Activated T-helper 1 cell treated with anti-CD3 and anti-CD28 coated beads, Interleukin-12 subunit alpha, Interleukin-12 subunit beta, Interleukin-2, Interleukin-4 antibody, amounts not matched to agents 30 ng/mL and 10 ng/mL and 1 ng/mL, durations not matched to agents 14 hours and 24 hours and 36 hours (primary cell): ENCODE measurements at regions of chr12 and their contacts with region 1.

Region 1: GRCh38 chr12:48851883-48852733 is at the start of gene DDX23:
- DNase-seq: peak; percentile 91
- H3K4me3 Mint-ChIP-seq: peak within 1 kb of the TSS; percentile 97
- H3K27ac Mint-ChIP-seq: peak within 1 kb of the TSS; percentile 93
- H3K4me1 Mint-ChIP-seq: peaks cover 31% of the 10 kb centered on the region
- H3K27me3 Mint-ChIP-seq: no peaks in the 10 kb centered on the region
- total RNA-seq, gene DDX23: 120 and 127 TPM in 2 replicates

Region 2: GRCh38 chr12:48814262-48815125 is 37.6 kb before region 1 on chr12:
- intact Hi-C with region 1: loop called (anchors 1 kb)
- DNase-seq: peak; percentile 78
- H3K4me3 Mint-ChIP-seq: peak overlapping the region; percentile 93
- H3K27ac Mint-ChIP-seq: peak overlapping the region; percentile 55
- H3K4me1 Mint-ChIP-seq: peaks cover 28% of the 10 kb centered on the region
- H3K27me3 Mint-ChIP-seq: peaks cover 8% of the 10 kb centered on the region

Region 3: DNA sequence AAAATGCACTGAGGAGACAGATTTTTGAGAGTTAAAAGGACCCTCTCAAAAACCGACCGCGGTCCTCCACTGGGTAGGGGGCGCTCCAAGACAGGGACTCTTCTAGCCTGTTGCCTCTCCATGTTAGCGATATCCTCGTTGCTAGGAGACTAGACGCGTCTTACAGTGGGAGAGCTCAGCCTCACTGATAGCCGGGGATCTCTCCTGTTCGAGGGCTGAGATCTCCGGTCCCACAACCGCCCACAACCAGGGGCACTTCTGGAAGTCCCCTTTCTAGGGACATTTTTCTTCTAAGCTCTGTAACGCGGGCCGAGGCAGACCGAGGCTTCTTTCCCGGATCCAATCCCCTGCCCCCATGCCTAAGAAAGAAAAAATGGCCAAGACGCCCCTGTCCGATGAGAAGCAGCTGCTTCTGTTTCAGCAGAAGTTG is 51.9 kb after region 1 on chr12:
- intact Hi-C with region 1: loop called (anchors 1 kb)
- DNase-seq: peak; percentile 70
- H3K4me3 Mint-ChIP-seq: peak overlapping the region; percentile 68
- H3K27ac Mint-ChIP-seq: peak overlapping the region; percentile 71
- H3K4me1 Mint-ChIP-seq: peaks cover 14% of the 10 kb centered on the region
- H3K27me3 Mint-ChIP-seq: peaks cover 8% of the 10 kb centered on the region

Region 4: DNA sequence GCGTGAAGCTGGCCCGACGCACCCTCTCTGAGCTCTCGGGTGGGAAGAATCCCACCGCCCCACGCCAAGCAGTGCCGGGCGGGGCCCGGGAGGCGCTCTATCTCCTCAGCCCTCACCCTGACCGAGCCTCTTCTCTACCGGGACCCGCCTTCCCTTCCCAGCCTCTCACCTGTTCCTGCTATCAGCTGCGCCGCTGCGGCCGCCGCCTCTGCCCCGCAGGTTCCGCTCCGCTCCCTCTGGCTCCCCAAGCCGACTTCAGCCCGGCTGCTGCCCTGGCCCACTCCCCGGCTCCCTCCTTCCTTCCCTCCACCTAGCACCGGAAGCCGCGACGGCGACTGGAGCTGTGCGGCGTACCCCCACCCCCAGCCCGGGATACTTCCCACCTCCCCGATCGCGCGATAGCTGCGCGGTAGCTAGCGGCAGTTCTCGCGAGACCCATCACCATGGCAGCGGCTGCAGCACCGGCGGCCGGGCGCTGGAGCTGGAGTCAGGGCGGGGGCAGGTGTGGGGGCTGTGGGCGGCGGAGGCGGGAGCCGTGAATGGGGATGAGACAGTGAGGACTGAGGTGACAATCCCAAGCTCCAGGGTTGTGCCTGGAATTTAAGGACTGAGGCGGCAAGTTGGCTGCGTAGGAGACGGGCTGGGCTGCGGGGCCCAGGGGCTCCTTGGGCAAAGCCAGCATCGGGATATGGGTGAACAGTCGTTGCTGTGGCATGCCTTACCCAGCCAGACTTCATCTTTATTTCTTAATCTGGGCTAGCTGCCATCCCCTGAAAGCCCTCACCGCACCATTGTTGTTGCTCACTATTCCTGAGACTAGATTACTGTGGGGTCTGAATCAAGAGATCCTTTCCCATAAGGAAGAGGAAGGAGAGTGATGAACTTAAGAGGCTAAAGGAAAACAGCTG is 105.3 kb after region 1 on chr12 and contains the start of gene ARF3:
- intact Hi-C with region 1: loop called (anchors 1 kb)
- DNase-seq: peak; percentile 91
- H3K4me3 Mint-ChIP-seq: peak within 1 kb of the TSS; percentile 94
- H3K27ac Mint-ChIP-seq: peak within 1 kb of the TSS; percentile 94
- H3K4me1 Mint-ChIP-seq: peaks cover 46% of the 10 kb centered on the region
- H3K27me3 Mint-ChIP-seq: peaks cover 33% of the 10 kb centered on the region
- total RNA-seq, gene ARF3: 116 and 117 TPM in 2 replicates

Region 5: GRCh38 chr12:49018261-49019119 is 166.4 kb after region 1 on chr12 and contains the start of gene PRKAG1:
- intact Hi-C with region 1: loop called (anchors 1 kb)
- DNase-seq: peak; percentile 97
- H3K4me3 Mint-ChIP-seq: peak within 1 kb of the TSS; percentile 88
- H3K27ac Mint-ChIP-seq: peak within 1 kb of the TSS; percentile 95
- H3K4me1 Mint-ChIP-seq: peaks cover 53% of the 10 kb centered on the region
- H3K27me3 Mint-ChIP-seq: no peaks in the 10 kb centered on the region
- total RNA-seq, gene PRKAG1: 85.0 and 85.1 TPM in 2 replicates

Region 6: DNA sequence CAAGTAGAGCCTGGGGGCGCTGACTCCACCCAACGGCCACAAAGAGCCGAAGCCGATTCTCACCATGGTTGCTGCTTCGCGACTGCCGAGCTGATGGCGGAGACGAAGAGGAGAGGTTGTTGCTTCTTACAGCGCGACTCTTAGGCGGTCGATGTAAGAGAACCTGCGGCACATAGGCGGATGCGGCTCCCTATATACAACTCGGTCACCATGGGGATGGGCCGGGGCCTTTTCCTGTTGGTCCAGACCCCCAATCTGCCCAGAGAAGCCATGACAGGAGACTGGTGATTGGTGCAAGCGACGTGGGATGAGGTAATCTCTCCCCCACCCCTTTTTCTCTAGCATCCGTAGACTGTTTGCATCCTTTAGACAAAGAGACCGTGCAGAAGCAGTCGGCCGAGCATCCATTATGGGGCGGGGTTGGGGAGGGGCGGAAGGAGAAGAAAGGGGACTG is 336.8 kb after region 1 on chr12 and contains the start of gene TUBA1A:
- intact Hi-C with region 1: loop called (anchors 1 kb)
- DNase-seq: peak; percentile 94
- H3K4me3 Mint-ChIP-seq: peak within 1 kb of the TSS; percentile 90
- H3K27ac Mint-ChIP-seq: peak within 1 kb of the TSS; percentile 95
- H3K4me1 Mint-ChIP-seq: peaks cover 15% of the 10 kb centered on the region
- H3K27me3 Mint-ChIP-seq: peaks cover 2% of the 10 kb centered on the region
- total RNA-seq, gene TUBA1A: 46.7 and 47.2 TPM in 2 replicates